ENCODE measurements at regions of chr20 and their contacts with region 1.

Region 1: GRCh38 chr20:52372169-52372568 is 180.6 kb upstream of the ZFP64 start:
- DNase-seq: no peak
- H3K4me3 ChIP-seq: no peak overlapping the region
- H3K27ac ChIP-seq: no peak overlapping the region
- H3K4me1 ChIP-seq: no peaks in the 10 kb centered on the region
- H3K27me3 ChIP-seq: no peaks in the 10 kb centered on the region
- CTCF ChIP-seq: no peak
- POLR2A ChIP-seq: no peak

Region 2: GRCh38 chr20:52321396-52321795 is 50.8 kb before region 1 on chr20:
- intact Hi-C with region 1: loop called in 1 of 2 experiments (anchors 5 kb)
- DNase-seq: no peak
- H3K4me3 ChIP-seq: no peak overlapping the region
- H3K27ac ChIP-seq: no peak overlapping the region
- H3K4me1 ChIP-seq: no peaks in the 10 kb centered on the region
- H3K27me3 ChIP-seq: no peaks in the 10 kb centered on the region
- CTCF ChIP-seq: no peak
- POLR2A ChIP-seq: no peak

Region 3: DNA sequence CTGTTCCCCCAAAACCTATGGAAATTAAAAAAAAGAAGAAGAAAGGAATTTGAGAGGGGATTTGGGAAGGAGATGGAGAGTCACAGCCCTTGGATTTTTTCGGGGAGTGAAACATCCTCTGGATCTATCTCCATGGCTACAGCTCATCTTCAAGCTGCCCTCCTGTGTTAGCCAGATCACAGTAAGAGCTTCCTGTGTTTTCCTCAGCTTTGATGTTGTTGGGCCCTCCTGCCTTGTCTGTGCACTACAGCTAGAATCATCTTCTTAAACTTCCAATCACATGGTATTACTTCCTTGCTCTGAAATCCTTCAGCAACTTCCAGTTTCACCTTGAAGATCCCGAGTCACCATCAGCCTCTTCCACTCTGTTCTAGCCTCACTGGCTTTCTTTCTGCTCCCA is 27.2 kb after region 1 on chr20:
- intact Hi-C with region 1: no loop called
- DNase-seq: no peak
- H3K4me3 ChIP-seq: no peak overlapping the region
- H3K27ac ChIP-seq: no peak overlapping the region
- H3K4me1 ChIP-seq: no peaks in the 10 kb centered on the region
- H3K27me3 ChIP-seq: no peaks in the 10 kb centered on the region
- CTCF ChIP-seq: no peak
- POLR2A ChIP-seq: no peak

Region 4: DNA sequence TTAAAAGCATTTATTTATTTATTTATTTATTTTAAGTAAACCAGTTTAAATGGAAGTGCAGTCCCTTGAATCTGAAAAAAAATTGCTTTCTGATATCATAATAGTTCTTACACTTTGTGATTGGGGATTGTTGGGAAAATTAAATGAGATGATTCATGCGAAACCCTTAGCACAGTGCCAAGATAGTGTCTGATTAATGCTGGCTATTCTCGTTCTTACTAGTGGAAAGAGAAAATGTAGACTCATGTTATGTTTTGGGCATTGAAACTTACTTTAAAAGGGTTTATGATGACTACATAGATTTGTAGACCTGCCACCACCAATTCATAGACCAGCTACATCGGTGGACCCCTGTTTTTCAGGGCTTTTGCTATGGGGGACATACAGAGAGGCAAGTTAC is 48.6 kb after region 1 on chr20:
- intact Hi-C with region 1: no loop called
- DNase-seq: no peak
- H3K4me3 ChIP-seq: no peak overlapping the region
- H3K27ac ChIP-seq: no peak overlapping the region
- H3K4me1 ChIP-seq: peaks cover 0 to 3% of the 10 kb centered on the region in 2 donors
- H3K27me3 ChIP-seq: no peaks in the 10 kb centered on the region
- CTCF ChIP-seq: no peak
- POLR2A ChIP-seq: no peak

Region 5: GRCh38 chr20:52432740-52433139 is 60.6 kb after region 1 on chr20:
- intact Hi-C with region 1: no loop called
- DNase-seq: no peak
- H3K4me3 ChIP-seq: no peak overlapping the region
- H3K27ac ChIP-seq: no peak overlapping the region
- H3K4me1 ChIP-seq: no peaks in the 10 kb centered on the region
- H3K27me3 ChIP-seq: peaks cover 6% of the 10 kb centered on the region
- CTCF ChIP-seq: no peak
- POLR2A ChIP-seq: no peak